WTC11 (cell line): ENCODE measurements at regions of chr9 and their contacts with region 1.

Region 1: DNA sequence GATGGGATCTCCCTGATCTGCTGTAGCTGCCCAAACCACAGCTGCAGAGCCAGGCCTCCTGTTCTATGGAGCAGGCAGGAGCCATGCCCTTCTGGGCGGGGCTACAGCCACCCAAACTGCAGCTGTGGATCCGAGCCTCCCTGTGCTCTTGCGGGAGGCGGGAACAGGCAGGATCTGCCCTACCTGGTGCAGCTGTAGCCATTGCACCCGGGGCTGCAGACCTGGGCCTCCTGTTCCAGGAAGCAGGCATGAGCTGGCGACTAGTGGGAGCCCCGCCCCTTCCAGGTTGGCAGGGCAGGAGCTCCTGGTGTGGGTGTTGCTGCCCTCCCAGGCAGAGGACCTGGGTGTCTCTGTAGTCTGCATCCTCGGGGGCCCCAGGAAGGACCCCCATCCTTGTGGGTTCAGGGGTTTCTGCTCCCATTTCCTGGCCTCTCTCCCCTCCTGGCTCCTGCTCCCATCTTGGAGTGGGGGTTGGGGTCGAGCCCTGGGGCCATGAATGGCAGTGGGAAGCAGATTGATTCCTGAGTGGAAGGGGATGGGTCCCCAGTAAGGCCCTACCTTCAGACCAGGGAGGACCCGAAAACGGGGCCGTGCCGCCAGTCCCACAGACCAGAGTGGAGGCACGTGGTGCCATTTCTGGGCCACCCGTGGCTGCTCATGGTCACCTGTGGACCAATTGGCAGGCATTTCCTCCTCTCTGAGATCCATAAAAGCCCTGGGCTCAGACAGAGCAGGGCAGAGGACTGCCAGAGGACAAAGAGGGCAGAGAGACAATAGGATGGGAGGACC is 22.9 kb upstream of the UNC13B start:
- DNase-seq: no peak
- ATAC-seq: no peak; the same call in 1 of the 2 replicates
- H3K4me3 Mint-ChIP-seq: no peak overlapping the region
- H3K27ac Mint-ChIP-seq: no peak overlapping the region
- H3K4me1 Mint-ChIP-seq: no peaks in the 10 kb centered on the region
- H3K27me3 Mint-ChIP-seq: peaks cover 13% of the 10 kb centered on the region
- CTCF ChIP-seq: no peak

Region 2: GRCh38 chr9:33167046-33167808 is 1971.6 kb before region 1 on chr9 and contains the start of gene B4GALT1:
- CTCF ChIA-PET with region 1: no interaction called
- POLR2A ChIA-PET with region 1: interaction called, 11 read pairs
- DNase-seq: peak; percentile 93
- ATAC-seq: peak; percentile 79
- H3K4me3 Mint-ChIP-seq: peak within 1 kb of the TSS; percentile 80
- H3K27ac Mint-ChIP-seq: no peak within 1 kb of the TSS
- H3K4me1 Mint-ChIP-seq: peaks cover 18% of the 10 kb centered on the region
- H3K27me3 Mint-ChIP-seq: peaks cover 32% of the 10 kb centered on the region
- CTCF ChIP-seq: no peak
- total RNA-seq, gene B4GALT1: 19.1 to 20.2 TPM (median 19.8 TPM) in 3 replicates

Region 3: DNA sequence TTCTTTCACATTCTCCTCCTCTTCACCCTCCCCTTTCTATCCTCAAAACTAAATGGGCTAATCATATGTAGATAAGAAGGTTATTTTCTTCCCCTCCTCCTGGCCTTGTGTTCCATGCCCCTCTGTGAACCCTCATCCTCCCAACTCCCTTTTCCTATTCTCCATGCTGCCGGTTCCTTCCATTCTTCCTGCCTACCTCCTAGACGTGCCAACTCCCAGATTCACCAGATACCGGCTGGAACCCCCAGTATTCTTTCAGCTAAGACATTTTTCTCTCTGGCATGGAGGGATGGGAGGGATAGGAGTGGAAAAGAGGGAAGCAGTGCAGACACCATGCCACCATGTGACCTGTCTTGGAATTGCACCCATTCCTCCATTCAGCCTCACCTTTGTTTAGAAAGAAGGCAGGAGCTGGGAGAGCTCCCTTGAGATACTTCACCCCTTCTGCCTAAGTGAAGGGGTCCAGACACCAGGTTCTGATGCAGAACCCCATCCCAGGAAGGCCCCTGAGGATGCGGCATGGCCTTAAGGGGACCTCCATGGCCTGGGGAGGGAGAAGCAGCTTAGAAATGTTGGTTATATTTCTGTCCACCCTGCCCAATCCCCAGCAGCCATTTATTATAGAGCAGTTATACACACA is 144.5 kb before region 1 on chr9:
- CTCF ChIA-PET with region 1: no interaction called
- POLR2A ChIA-PET with region 1: no interaction called
- DNase-seq: peak; percentile 54
- ATAC-seq: peak; percentile 11
- H3K4me3 Mint-ChIP-seq: peak overlapping the region; percentile 6; the same call in 1 of the 2 replicates
- H3K27ac Mint-ChIP-seq: peak overlapping the region; percentile 76
- H3K4me1 Mint-ChIP-seq: peaks cover 52% of the 10 kb centered on the region
- H3K27me3 Mint-ChIP-seq: no peaks in the 10 kb centered on the region; the same call in 1 of the 2 replicates
- CTCF ChIP-seq: peak; percentile 49

Region 4: GRCh38 chr9:35014517-35014916 is 124.4 kb before region 1 on chr9:
- CTCF ChIA-PET with region 1: no interaction called
- POLR2A ChIA-PET with region 1: no interaction called
- DNase-seq: no peak
- ATAC-seq: no peak
- H3K4me3 Mint-ChIP-seq: no peak overlapping the region
- H3K27ac Mint-ChIP-seq: no peak overlapping the region
- H3K4me1 Mint-ChIP-seq: peaks cover 10% of the 10 kb centered on the region
- H3K27me3 Mint-ChIP-seq: peaks cover 20% of the 10 kb centered on the region
- CTCF ChIP-seq: no peak